ENCODE measurements at regions of chr11 and their contacts with region 1.

Region 1: GRCh38 chr11:33687733-33688479 is 12.7 kb downstream of the C11orf91 start:
- DNase-seq: peak; percentile 78
- ATAC-seq: no peak
- H3K4me3 ChIP-seq: no peak overlapping the region
- H3K27ac ChIP-seq: no peak overlapping the region
- H3K4me1 ChIP-seq: peaks cover 28% of the 10 kb centered on the region
- H3K27me3 ChIP-seq: no peaks in the 10 kb centered on the region
- CTCF ChIP-seq: peak; percentile 96
- POLR2A ChIP-seq: peak; percentile 55; the same call in 1 of the 2 replicates
- RAD21 ChIP-seq: peak; percentile 98

Region 2: DNA sequence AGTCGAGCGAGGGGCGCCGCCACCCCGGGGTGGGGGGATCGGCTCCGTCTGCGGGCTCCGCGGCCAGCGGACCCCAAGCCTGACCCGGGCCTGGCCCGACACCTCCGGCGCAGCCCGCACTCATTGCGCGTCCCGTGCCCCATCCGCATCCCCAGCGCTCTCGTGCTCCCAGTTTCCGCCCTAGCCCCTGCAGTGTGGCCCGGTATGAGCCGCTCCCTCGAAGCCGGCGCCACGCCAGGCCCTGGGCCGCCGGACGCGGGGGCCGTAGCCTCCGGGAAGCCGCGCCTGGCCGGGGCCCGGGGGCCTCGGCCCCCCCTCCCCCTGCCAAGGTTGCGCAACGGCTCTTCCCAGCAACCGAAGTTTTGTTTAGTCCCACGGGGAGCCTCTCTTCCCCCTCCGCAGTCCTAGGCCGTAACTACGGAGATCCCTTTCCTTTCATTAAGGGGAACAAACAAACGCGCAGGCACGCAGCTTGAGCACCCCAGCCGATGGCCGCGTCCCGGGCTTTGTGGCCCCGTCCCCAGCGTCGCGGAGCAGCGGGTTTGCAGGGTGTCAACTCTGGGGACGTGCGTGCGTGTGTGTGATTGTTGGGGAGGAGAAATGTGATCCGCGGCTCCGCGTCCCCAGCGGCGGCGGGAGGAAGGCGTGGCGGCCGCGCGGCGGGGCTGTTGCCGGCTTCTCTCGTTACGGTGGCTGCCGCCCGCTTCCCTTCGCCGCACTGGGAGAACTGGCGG is 429.8 kb before region 1 on chr11:
- CTCF ChIA-PET with region 1: no interaction called
- POLR2A ChIA-PET with region 1: no interaction called
- dilution Hi-C with region 1: no loop called
- in situ Hi-C with region 1: no loop called
- intact Hi-C with region 1: loop called (anchors 2 kb)
- DNase-seq: peak; percentile 83
- ATAC-seq: peak; percentile 65
- H3K4me3 ChIP-seq: peak overlapping the region; percentile 96
- H3K27ac ChIP-seq: peak overlapping the region; percentile 100
- H3K4me1 ChIP-seq: peaks cover 3% of the 10 kb centered on the region
- H3K27me3 ChIP-seq: no peaks in the 10 kb centered on the region
- CTCF ChIP-seq: 0 out of 2 replicates have a peak, but pooled peaks have one; percentile 19
- POLR2A ChIP-seq: peak; percentile 64
- RAD21 ChIP-seq: no peak

Region 3: DNA sequence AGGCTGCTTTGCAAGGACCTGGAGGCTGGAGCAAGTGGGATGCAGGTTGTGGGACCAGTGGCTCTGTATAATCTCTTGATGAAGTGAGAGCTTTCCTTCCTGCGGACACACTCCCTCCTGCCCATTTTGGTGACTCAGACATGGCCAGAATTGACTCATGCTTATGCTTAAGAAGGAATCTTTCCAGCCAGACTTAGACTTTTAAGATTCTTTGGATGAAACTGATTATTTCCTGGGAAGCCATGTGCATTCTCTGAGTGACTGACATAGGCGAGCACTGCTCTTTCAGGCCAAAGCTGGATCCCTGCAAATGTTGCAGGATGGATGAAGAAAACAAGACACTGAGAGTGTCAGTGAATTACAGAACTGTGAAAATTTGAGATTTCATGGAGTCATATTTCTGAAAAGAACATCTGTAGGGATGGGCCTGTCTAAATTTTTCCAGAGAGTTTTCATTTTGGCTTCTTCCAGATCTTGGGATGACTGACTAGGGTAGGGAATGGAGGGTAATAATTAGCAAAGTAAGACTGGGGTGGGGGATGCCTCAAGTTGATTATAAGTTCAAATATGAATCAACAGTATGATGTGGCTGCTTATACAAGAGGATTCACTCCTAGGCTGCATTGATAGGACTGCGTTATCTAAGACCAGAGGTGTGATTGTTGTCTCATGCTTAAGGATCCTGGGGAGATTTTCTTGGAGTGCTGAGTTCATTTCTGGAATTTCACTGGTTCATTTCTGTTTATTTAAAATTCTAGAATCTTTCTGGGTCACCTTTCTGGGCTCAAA is 234.9 kb before region 1 on chr11:
- CTCF ChIA-PET with region 1: no interaction called
- POLR2A ChIA-PET with region 1: no interaction called
- dilution Hi-C with region 1: no loop called
- in situ Hi-C with region 1: no loop called
- intact Hi-C with region 1: loop called (anchors 5 kb)
- DNase-seq: peak; percentile 94
- ATAC-seq: peak; percentile 91
- H3K4me3 ChIP-seq: no peak overlapping the region
- H3K27ac ChIP-seq: no peak overlapping the region
- H3K4me1 ChIP-seq: peaks cover 8% of the 10 kb centered on the region
- H3K27me3 ChIP-seq: no peaks in the 10 kb centered on the region
- CTCF ChIP-seq: no peak
- POLR2A ChIP-seq: no peak
- RAD21 ChIP-seq: no peak

Region 4: DNA sequence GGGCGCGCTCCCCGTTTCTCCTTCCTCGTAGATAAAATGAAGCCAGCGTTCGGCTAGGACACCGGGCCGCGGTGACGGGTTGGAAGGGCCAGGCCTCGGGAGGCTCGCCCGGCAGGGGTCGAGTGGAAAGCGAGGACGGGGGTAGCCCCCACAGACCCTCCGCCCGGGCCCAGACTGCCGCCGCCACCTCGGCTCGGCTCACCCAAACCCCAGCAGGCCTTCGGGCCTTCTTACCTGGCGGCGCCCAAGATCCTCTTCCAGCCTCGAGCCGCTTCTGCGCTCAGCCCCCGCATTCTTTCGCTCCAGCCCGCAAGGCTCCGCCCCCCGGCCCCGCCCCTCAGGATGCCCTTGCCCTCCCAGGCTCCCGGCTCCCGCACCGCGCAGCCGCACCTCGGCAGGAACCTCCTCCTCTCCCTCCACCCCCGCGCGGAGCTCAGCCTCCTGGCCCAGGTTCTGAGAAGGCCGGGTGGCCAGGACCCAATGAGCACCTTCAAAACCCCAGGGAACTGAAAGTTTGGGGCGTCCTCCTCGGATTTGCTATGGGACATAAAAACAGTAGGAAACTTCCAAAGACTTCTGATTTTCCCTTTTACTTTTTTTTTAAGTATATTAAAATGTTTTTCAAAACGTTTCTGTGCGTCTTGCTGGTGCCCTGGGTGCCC is 48.4 kb after region 1 on chr11 and contains the start of gene CD59:
- CTCF ChIA-PET with region 1: interaction called, 4 read pairs
- POLR2A ChIA-PET with region 1: interaction called, 3 read pairs
- dilution Hi-C with region 1: no loop called
- in situ Hi-C with region 1: no loop called
- intact Hi-C with region 1: loop called (anchors 2 kb)
- DNase-seq: peak; percentile 88
- ATAC-seq: peak; percentile 94
- H3K4me3 ChIP-seq: peak within 1 kb of the TSS; percentile 77
- H3K27ac ChIP-seq: peak within 1 kb of the TSS; percentile 84
- H3K4me1 ChIP-seq: peaks cover 16% of the 10 kb centered on the region
- H3K27me3 ChIP-seq: no peaks in the 10 kb centered on the region
- CTCF ChIP-seq: no peak
- POLR2A ChIP-seq: peak; percentile 91
- RAD21 ChIP-seq: no peak
- total RNA-seq, gene CD59: 637 and 765 TPM in 2 replicates

Region 5: GRCh38 chr11:33819278-33819677 is 131.4 kb after region 1 on chr11:
- CTCF ChIA-PET with region 1: no interaction called
- POLR2A ChIA-PET with region 1: no interaction called
- dilution Hi-C with region 1: no loop called
- in situ Hi-C with region 1: no loop called
- intact Hi-C with region 1: no loop called
- DNase-seq: no peak
- ATAC-seq: no peak
- H3K4me3 ChIP-seq: no peak overlapping the region
- H3K27ac ChIP-seq: no peak overlapping the region
- H3K4me1 ChIP-seq: no peaks in the 10 kb centered on the region
- H3K27me3 ChIP-seq: peaks cover 72% of the 10 kb centered on the region
- CTCF ChIP-seq: no peak
- POLR2A ChIP-seq: no peak
- RAD21 ChIP-seq: no peak

Region 6: DNA sequence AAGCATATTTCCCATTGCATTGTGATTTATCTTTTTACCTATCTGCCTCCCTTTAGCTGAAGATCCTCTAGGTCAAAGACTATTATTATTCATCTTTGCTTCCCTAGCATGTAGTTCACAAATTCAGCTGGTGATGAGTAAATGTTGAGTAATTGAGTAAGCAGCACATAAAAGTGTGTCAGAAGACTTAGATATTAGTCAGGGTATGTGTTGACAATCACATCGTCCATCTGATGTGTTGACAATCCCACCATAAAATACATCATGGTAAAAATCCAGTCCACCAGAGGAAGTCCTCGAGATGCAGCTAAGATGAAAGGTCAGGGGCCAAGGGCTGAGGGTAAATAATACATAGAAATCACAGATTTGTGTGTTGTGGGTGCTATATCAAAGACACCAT is 692.8 kb after region 1 on chr11:
- CTCF ChIA-PET with region 1: no interaction called
- POLR2A ChIA-PET with region 1: no interaction called
- dilution Hi-C with region 1: no loop called
- in situ Hi-C with region 1: no loop called
- intact Hi-C with region 1: no loop called
- DNase-seq: peak; percentile 53
- ATAC-seq: peak; percentile 44; the same call in 1 of the 2 replicates
- H3K4me3 ChIP-seq: no peak overlapping the region
- H3K27ac ChIP-seq: no peak overlapping the region
- H3K4me1 ChIP-seq: peaks cover 3% of the 10 kb centered on the region; the same call in 1 of the 2 replicates
- H3K27me3 ChIP-seq: 0 out of 2 replicates have a peak, but pooled peaks cover 4% of the 10 kb centered on the region
- CTCF ChIP-seq: no peak
- POLR2A ChIP-seq: no peak
- RAD21 ChIP-seq: no peak